ENCODE measurements at regions of chr12 and their contacts with region 1.

Region 1: DNA sequence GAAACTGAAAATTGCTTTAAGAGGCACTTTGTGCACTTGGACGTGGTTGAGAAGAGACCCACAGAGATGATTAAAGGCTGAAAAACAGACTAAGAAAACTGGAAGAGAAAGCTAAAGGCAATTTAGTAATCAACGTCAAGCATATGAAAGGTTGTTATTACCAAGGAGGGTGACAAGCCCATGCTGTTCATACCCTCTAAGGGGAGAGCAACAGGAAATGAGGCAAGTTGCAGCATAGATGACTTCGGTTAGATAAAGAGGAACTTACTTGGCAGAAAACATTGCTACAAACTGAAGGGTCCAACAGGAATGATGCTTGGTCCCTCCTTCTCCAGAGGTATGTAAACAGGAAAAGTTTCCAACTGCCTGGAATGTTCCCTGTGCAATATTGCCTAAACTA is 107.8 kb downstream of the DUSP6 start:
- DNase-seq: peak; percentile 48
- H3K4me3 Mint-ChIP-seq: peak overlapping the region; percentile 55
- H3K27ac Mint-ChIP-seq: peak overlapping the region; percentile 96
- H3K4me1 Mint-ChIP-seq: peaks cover 56% of the 10 kb centered on the region
- H3K27me3 Mint-ChIP-seq: no peaks in the 10 kb centered on the region

Region 2: GRCh38 chr12:89162704-89163261 is 81.8 kb before region 1 on chr12:
- CTCF ChIA-PET with region 1: interaction called, 6 read pairs
- POLR2A ChIA-PET with region 1: interaction called, 16 read pairs
- DNase-seq: peak; percentile 70
- H3K4me3 Mint-ChIP-seq: no peak overlapping the region
- H3K27ac Mint-ChIP-seq: no peak overlapping the region
- H3K4me1 Mint-ChIP-seq: peaks cover 25% of the 10 kb centered on the region
- H3K27me3 Mint-ChIP-seq: no peaks in the 10 kb centered on the region

Region 3: GRCh38 chr12:89225808-89226411 is 18.6 kb before region 1 on chr12:
- CTCF ChIA-PET with region 1: interaction called, 30 read pairs
- POLR2A ChIA-PET with region 1: interaction called, 56 read pairs
- DNase-seq: peak; percentile 30
- H3K4me3 Mint-ChIP-seq: peak overlapping the region; percentile 12
- H3K27ac Mint-ChIP-seq: peak overlapping the region; percentile 92
- H3K4me1 Mint-ChIP-seq: peaks cover 73% of the 10 kb centered on the region
- H3K27me3 Mint-ChIP-seq: no peaks in the 10 kb centered on the region

Region 4: GRCh38 chr12:89461649-89462612 is 217.4 kb after region 1 on chr12:
- CTCF ChIA-PET with region 1: interaction called, 3 read pairs
- POLR2A ChIA-PET with region 1: interaction called, 16 read pairs
- DNase-seq: no peak
- H3K4me3 Mint-ChIP-seq: peak overlapping the region; percentile 65
- H3K27ac Mint-ChIP-seq: peak overlapping the region; percentile 59
- H3K4me1 Mint-ChIP-seq: peaks cover 62% of the 10 kb centered on the region
- H3K27me3 Mint-ChIP-seq: no peaks in the 10 kb centered on the region

Measured in activated CD4-positive, alpha-beta memory T cell treated with anti-CD3 and anti-CD28 coated beads, Interleukin-2, amount 10 ng/mL, durations not matched to agents 7 days and 5 days (primary cell).